Heart right ventricle (tissue), 16 donors: ENCODE measurements at regions of chr18 and their contacts with region 1.

Region 1: GRCh38 chr18:6666012-6666685 is 63.4 kb upstream of the ARHGAP28 start:
- DNase-seq: no peak
- ATAC-seq: no peak
- H3K4me3 ChIP-seq: no peak overlapping the region
- H3K27ac ChIP-seq: no peak overlapping the region
- H3K4me1 ChIP-seq: peaks cover 0 to 11% (median 0%) of the 10 kb centered on the region in 9 donors
- H3K27me3 ChIP-seq: no peaks in the 10 kb centered on the region
- CTCF ChIP-seq: no peak

Region 2: DNA sequence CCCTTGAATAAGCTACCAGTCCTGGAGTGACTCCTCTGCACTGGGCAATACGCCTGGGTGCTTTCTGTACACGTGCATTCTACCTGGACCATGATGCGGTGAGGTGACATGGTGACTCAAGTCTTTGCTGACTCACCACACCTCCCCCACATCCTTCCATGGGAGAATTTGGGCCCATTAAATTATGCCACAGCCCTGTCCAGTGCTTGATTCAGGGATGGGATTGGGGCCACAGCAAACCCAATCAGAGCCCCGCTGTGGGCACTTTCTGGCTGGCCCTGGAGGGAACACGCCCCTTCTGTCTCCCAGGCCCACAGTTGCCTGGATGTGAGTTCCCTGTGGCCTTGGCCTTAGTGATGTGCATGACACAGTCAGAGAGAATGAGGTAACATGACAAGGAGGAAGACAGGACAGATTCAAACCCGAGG is 651.7 kb after region 1 on chr18:
- intact Hi-C with region 1: no loop called
- DNase-seq: no peak
- ATAC-seq: no peak
- H3K4me3 ChIP-seq: no peak overlapping the region
- H3K27ac ChIP-seq: no peak overlapping the region
- H3K4me1 ChIP-seq: peaks cover 0 to 12% (median 0%) of the 10 kb centered on the region in 9 donors
- H3K27me3 ChIP-seq: peaks cover 0 to 5% (median 0%) of the 10 kb centered on the region in 7 donors
- CTCF ChIP-seq: no peak

Region 3: GRCh38 chr18:8194431-8194830 is 1528.3 kb after region 1 on chr18:
- intact Hi-C with region 1: loop called in 1 of 10 experiments (anchors 5 kb)
- DNase-seq: no peak
- ATAC-seq: no peak
- H3K4me3 ChIP-seq: no peak overlapping the region
- H3K27ac ChIP-seq: no peak overlapping the region
- H3K4me1 ChIP-seq: peaks cover 0 to 20% (median 0%) of the 10 kb centered on the region in 9 donors
- H3K27me3 ChIP-seq: no peaks in the 10 kb centered on the region
- CTCF ChIP-seq: no peak